SK-MEL-5 (cell line): ENCODE measurements at regions of chr2 and their contacts with region 1.

Region 1: DNA sequence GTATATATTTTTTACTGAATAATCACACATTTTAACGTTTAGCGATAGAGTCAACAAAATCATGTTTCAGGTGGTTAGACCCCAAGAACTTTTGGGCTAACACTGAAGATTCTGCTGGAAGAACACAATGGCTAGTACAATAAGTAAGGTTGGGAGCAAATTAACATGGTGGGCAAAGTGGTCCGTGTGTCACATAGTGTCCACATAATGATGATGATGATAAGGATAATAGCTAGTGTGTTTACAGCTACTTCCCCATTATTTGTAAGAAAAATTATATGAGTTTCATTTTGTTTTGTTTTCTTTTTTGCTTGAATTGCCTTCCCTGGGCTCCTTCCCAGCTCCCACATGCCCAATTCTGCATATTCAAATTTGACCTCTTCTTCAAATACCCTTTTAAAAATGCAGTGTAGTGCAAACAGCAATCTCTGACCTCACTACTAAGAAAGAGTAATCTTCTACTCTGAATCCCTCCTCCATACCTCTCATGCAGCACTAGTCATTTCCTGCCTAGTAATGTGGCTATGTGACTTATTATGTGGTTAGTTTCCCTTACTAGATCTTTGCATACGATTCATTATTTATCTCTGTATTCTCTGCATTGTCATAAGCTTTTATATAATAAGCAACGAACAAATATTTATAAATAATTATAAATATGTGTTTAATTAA is 16.9 kb upstream of the VPS54 start:
- DNase-seq: no peak

Region 2: GRCh38 chr2:64311948-64312621 is 275.9 kb after region 1 on chr2:
- in situ Hi-C with region 1: loop called (anchors 25 kb)
- DNase-seq: peak; percentile 94